ENCODE measurements at regions of chr10 and their contacts with region 1.

Region 1: GRCh38 chr10:88687853-88688467 is 18.1 kb upstream of the LIPK start:
- DNase-seq: peak; percentile 41
- H3K4me3 ChIP-seq: no peak overlapping the region
- H3K27ac ChIP-seq: no peak overlapping the region
- H3K4me1 ChIP-seq: peaks cover under 1% of the 10 kb centered on the region
- H3K27me3 ChIP-seq: no peaks in the 10 kb centered on the region
- CTCF ChIP-seq: peak; percentile 85

Region 2: GRCh38 chr10:88791924-88792323 is 104.0 kb after region 1 on chr10:
- CTCF ChIA-PET with region 1: no interaction called
- POLR2A ChIA-PET with region 1: no interaction called
- intact Hi-C with region 1: loop called (anchors 5 kb)
- DNase-seq: peak; percentile 74
- H3K4me3 ChIP-seq: no peak overlapping the region
- H3K27ac ChIP-seq: no peak overlapping the region
- H3K4me1 ChIP-seq: no peaks in the 10 kb centered on the region
- H3K27me3 ChIP-seq: no peaks in the 10 kb centered on the region
- CTCF ChIP-seq: peak; percentile 71

Measured in A673 (cell line).